HEK293 (cell line): ENCODE measurements at regions of chr6 and their contacts with region 1.

Region 1: GRCh38 chr6:47047479-47048407 is 5.6 kb upstream of the ADGRF1 start:
- H3K4me3 ChIP-seq: no peak overlapping the region
- H3K27ac ChIP-seq: no peak overlapping the region
- H3K4me1 ChIP-seq: peaks cover 3% of the 10 kb centered on the region; the same call in 1 of the 2 replicates
- CTCF ChIP-seq: peak; percentile 85

Region 2: DNA sequence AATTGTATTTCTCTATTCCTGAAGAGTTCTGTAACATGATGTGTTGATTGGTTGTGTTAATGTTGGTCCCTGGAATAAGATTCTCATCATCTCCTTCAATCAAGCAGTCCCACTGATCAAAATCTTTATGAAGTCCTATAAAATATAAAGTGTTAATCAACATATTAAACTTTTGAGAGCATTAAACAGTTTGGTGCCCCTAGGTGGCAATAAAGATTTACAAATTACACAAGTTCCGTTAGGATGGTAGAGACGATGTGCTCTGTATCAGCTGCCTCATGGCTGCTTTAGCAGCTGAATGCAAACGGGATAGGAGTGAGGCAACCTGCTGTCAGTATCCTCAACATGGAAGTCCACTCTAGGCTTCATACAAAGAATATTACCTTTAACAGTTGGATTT is 343.2 kb before region 1 on chr6:
- CTCF ChIA-PET with region 1: interaction called, 10 read pairs
- POLR2A ChIA-PET with region 1: no interaction called
- H3K4me3 ChIP-seq: no peak overlapping the region
- H3K27ac ChIP-seq: no peak overlapping the region
- H3K4me1 ChIP-seq: peaks cover 11% of the 10 kb centered on the region
- CTCF ChIP-seq: peak; percentile 24; the same call in 1 of the 2 replicates

Region 3: GRCh38 chr6:46848684-46849360 is 198.9 kb before region 1 on chr6:
- CTCF ChIA-PET with region 1: interaction called, 60 read pairs
- POLR2A ChIA-PET with region 1: no interaction called
- H3K4me3 ChIP-seq: no peak overlapping the region
- H3K27ac ChIP-seq: no peak overlapping the region
- H3K4me1 ChIP-seq: peaks cover 3% of the 10 kb centered on the region
- CTCF ChIP-seq: peak; percentile 90

Region 4: DNA sequence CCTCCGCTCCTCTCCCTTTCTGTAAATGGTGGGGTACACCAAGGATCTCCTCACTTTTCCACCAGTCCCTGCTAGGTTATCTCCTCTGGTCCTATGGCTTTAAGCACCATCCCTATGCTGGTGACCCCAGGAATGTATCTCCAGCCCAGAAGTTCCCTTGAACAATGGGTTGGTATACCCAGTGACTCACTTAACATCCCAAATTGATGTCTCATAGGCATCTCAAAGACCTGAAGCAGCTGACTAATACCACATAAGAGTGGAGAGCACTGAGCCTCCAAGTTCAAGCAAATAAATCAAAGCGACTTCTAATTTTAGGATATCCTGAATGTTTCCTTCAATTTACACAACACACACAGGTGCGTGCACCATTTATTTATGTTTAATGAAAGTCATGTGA is 53.9 kb before region 1 on chr6:
- CTCF ChIA-PET with region 1: interaction called, 14 read pairs
- POLR2A ChIA-PET with region 1: no interaction called
- H3K4me3 ChIP-seq: no peak overlapping the region
- H3K27ac ChIP-seq: no peak overlapping the region
- H3K4me1 ChIP-seq: peaks cover 7% of the 10 kb centered on the region
- CTCF ChIP-seq: no peak

Region 5: DNA sequence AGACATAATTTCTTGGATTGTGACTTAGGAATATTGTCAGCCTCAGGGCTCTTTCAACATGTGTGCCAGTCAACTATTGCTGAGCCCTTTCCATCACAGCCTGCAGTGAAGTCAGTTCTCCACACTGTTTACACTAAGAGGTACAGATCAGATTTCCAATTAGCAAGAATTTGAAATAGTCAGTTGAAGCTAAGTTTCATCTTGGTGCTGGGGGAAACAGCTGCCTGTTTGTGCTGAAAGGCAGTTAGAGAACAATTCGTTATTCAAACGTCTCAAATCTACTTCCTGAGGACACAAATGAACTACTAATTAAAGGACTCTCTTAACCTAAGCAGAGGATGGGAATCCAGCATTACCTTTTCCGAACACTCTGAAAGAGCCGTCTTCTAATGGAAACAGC is 31.5 kb before region 1 on chr6:
- CTCF ChIA-PET with region 1: interaction called, 11 read pairs
- POLR2A ChIA-PET with region 1: no interaction called
- H3K4me3 ChIP-seq: no peak overlapping the region
- H3K27ac ChIP-seq: no peak overlapping the region
- H3K4me1 ChIP-seq: peaks cover 7% of the 10 kb centered on the region
- CTCF ChIP-seq: no peak

Region 6: GRCh38 chr6:47034919-47035318 is 12.8 kb before region 1 on chr6:
- CTCF ChIA-PET with region 1: interaction called, 44 read pairs
- POLR2A ChIA-PET with region 1: interaction called, 6 read pairs
- H3K4me3 ChIP-seq: no peak overlapping the region
- H3K27ac ChIP-seq: peak overlapping the region; percentile 72
- H3K4me1 ChIP-seq: peaks cover 18% of the 10 kb centered on the region
- CTCF ChIP-seq: no peak

Region 7: GRCh38 chr6:47084610-47085009 is 36.9 kb after region 1 on chr6:
- CTCF ChIA-PET with region 1: no interaction called
- POLR2A ChIA-PET with region 1: no interaction called
- H3K4me3 ChIP-seq: no peak overlapping the region
- H3K27ac ChIP-seq: no peak overlapping the region
- H3K4me1 ChIP-seq: peaks cover 11% of the 10 kb centered on the region
- CTCF ChIP-seq: no peak

Region 8: GRCh38 chr6:47097092-47097945 is 49.6 kb after region 1 on chr6:
- CTCF ChIA-PET with region 1: interaction called, 10 read pairs
- POLR2A ChIA-PET with region 1: no interaction called
- H3K4me3 ChIP-seq: no peak overlapping the region
- H3K27ac ChIP-seq: no peak overlapping the region
- H3K4me1 ChIP-seq: no peaks in the 10 kb centered on the region
- CTCF ChIP-seq: peak; percentile 56